ENCODE measurements at regions of chr6 and their contacts with region 1.

Region 1: DNA sequence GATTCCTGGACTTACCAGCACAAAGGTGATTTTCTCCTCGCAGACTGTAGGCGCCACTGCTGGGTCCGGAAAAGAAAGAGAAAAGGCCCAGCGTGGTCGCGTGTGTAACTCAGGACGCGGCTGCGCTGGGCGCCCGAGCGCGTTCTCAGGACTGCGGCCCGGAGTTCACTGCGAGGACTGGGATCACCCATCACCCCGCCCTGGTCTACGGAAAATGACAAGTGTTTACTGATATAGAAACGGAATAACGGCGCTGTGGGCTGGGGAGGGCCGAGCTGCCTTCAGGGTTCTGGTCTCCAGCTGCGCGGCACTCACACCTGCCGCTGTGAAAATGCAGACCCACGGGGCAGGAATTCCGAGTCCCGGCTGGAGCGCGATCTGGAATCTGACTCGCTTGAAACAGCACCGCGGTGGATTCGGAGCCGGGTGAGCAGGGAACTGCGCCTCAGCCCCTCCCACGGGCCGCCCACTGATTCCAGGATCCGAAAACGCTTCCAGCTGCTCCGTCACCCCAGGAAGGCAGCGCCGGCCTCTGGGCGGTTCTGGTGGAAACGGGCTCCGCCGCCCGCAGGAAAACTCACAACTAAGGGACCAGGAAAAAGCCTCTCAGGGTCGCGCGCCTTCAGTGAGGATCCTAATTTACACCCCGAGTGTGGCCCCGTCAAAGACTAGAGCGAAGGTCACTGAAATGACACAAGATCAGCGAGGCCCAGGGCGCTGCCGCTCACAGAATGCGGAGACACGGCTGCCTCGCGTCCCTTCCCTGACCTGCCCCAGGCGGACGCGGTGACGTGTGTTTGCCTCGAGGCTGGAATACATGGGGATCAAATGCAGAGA is 34.5 kb downstream of the HLA-A start:
- DNase-seq: peak; percentile 45
- ATAC-seq: peak; percentile 87
- H3K4me3 Mint-ChIP-seq: peak overlapping the region; percentile 91
- H3K27ac Mint-ChIP-seq: peak overlapping the region; percentile 26
- H3K4me1 Mint-ChIP-seq: peaks cover 33% of the 10 kb centered on the region
- H3K27me3 Mint-ChIP-seq: peaks cover 47% of the 10 kb centered on the region
- CTCF ChIP-seq: no peak

Region 2: GRCh38 chr6:29153083-29153482 is 823.7 kb before region 1 on chr6:
- CTCF ChIA-PET with region 1: no interaction called
- POLR2A ChIA-PET with region 1: no interaction called
- intact Hi-C with region 1: no loop called
- DNase-seq: no peak
- ATAC-seq: no peak
- H3K4me3 Mint-ChIP-seq: no peak overlapping the region
- H3K27ac Mint-ChIP-seq: no peak overlapping the region
- H3K4me1 Mint-ChIP-seq: no peaks in the 10 kb centered on the region
- H3K27me3 Mint-ChIP-seq: peaks cover 18% of the 10 kb centered on the region
- CTCF ChIP-seq: no peak

Region 3: GRCh38 chr6:29958921-29959320 is 17.9 kb before region 1 on chr6:
- CTCF ChIA-PET with region 1: no interaction called
- POLR2A ChIA-PET with region 1: no interaction called
- intact Hi-C with region 1: loop called (anchors 2 kb)
- DNase-seq: no peak
- ATAC-seq: peak; percentile 14
- H3K4me3 Mint-ChIP-seq: peak overlapping the region; percentile 41
- H3K27ac Mint-ChIP-seq: peak overlapping the region; percentile 70
- H3K4me1 Mint-ChIP-seq: peaks cover 35% of the 10 kb centered on the region
- H3K27me3 Mint-ChIP-seq: no peaks in the 10 kb centered on the region
- CTCF ChIP-seq: no peak

Region 4: DNA sequence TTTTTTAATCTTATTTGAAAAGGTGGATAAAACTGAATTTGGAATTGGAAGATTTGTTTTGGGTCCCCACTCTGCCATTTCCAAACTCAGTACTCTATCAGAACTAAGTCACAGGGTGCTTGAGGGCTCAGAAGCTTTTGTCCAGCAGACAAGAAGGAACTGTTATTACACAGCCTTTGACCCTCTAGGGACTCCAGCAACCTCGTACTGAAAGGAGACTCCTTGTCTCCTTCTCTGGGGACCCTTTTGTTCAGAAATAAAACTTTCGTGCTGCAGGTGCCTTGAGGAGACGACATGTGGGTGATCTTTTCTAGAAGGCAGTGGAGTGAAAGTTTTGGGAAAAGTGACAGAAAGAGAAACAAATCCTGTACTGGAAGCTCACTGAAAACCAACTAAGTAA is 76.9 kb after region 1 on chr6:
- CTCF ChIA-PET with region 1: no interaction called
- POLR2A ChIA-PET with region 1: no interaction called
- intact Hi-C with region 1: no loop called
- DNase-seq: no peak
- ATAC-seq: no peak
- H3K4me3 Mint-ChIP-seq: no peak overlapping the region
- H3K27ac Mint-ChIP-seq: no peak overlapping the region
- H3K4me1 Mint-ChIP-seq: no peaks in the 10 kb centered on the region
- H3K27me3 Mint-ChIP-seq: no peaks in the 10 kb centered on the region
- CTCF ChIP-seq: no peak

Measured in activated B cell treated with CpG ODN at 0.5 μM for 24 hours (primary cell).